Ascending aorta (tissue), 2 donors: ENCODE measurements at regions of chr5 and their contacts with region 1.

Region 1: DNA sequence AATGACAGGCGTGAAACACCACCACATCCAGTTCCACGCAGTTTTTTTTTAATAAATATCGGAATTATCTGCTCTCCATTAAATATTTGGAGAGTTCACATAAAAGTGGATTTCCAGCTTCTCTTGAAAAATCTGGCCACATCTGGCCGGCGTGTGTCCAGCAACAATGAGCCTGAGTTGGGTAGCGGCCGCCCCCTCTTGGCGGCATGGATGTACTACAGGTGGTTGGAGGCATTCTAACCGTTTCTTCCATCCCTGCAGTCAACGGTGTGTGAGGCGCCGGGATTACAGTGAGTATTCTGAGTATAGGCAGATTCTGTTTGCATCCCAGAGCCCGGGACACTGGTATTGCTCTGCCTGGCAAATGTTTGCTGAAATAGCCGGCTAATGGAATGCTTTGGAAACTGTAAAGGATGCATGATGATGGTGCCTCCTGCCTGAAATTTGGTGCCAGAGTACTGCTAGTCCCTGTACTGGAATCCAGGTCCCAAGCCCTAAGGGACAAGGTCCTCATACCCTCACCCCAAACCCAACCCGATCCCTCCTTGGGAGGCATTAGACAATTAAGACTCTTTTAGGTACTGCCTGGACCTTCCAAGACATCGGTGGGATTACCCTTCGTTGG is 13.6 kb upstream of the GM2A start:
- DNase-seq: peak in 1 of 2 donors; percentile 90
- H3K4me3 ChIP-seq: peak overlapping the region; percentile 37 to 45
- H3K27ac ChIP-seq: peak overlapping the region; percentile 48 to 53
- H3K4me1 ChIP-seq: peaks cover 0 to 4% of the 10 kb centered on the region in 2 donors
- H3K27me3 ChIP-seq: no peaks in the 10 kb centered on the region
- CTCF ChIP-seq: peak; percentile 72 to 92 (median 74)

Region 2: GRCh38 chr5:151051066-151051930 is 188.1 kb before region 1 on chr5:
- intact Hi-C with region 1: loop called (anchors 10 kb)
- DNase-seq: peak in 1 of 2 donors; percentile 91
- H3K4me3 ChIP-seq: no peak overlapping the region
- H3K27ac ChIP-seq: no peak overlapping the region
- H3K4me1 ChIP-seq: peaks cover 0 to 6% of the 10 kb centered on the region in 2 donors
- H3K27me3 ChIP-seq: no peaks in the 10 kb centered on the region
- CTCF ChIP-seq: peak; percentile 80 to 87 (median 86)

Region 3: DNA sequence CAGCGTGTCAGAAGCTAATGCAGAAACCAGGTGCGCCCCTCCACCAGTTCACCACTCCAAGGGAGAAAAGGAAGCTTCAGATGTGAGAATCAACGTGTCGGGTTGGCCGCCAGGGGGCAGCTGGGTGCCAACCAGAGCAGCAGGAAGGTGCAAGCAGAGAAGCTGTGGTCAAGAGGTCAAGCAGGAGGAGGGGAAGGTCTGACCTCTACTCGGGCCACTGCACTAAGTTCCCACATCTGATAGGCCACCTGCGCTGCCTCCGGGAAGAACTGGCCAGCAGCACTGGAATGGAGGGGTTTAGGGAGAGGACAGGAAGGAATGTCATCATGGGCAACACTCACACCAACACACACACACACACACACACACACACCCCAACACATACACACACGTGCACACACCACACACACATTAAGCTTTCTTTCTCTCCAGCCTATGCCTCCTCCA is 113.1 kb before region 1 on chr5:
- intact Hi-C with region 1: loop called (anchors 1 kb)
- DNase-seq: peak in 1 of 2 donors; percentile 82
- H3K4me3 ChIP-seq: no peak overlapping the region
- H3K27ac ChIP-seq: no peak overlapping the region
- H3K4me1 ChIP-seq: peaks cover 0 to 11% of the 10 kb centered on the region in 2 donors
- H3K27me3 ChIP-seq: no peaks in the 10 kb centered on the region
- CTCF ChIP-seq: peak; percentile 69 to 78 (median 78)

Region 4: DNA sequence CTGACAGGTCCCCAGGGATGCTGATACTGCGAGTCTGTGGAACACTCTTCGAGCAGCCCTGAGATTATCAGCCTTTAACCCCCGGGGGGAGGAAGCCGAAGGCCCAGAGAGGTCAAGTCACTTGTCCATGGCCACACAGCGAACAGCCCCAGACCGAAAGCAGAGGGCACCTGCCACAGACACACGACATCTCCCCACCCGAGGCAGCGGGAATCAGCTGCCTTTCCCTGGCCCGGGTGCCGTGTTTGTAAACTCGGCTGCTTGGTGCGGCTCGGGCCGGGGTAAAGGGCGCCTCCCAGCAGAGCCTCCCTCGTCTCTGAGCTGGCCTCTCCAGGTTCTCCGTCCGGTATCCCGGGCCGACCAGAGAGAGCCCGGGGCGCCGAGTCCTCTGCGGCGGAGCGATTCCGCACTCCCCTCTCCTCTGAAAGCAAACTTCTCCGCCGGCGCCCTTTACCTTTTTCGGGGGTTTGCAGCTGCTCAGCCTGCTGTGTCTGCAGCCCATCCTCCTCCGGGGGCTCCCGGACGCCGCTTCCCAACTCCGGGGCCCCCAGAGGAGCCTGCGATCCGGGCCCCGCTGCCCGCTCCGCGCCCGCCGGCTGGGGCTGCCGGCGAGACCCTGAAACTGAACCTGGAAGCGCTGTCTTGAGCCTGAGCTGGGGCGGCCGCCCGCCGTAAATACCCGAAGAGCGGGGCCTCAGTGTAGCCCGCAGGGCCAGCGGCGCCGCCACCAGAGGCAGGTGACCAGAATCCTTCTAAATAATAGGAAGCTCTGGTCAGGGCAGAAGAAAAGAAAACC is 15.7 kb before region 1 on chr5 and contains the start of gene CCDC69:
- intact Hi-C with region 1: loop called (anchors 1 kb)
- DNase-seq: peak in 1 of 2 donors; percentile 88
- H3K4me3 ChIP-seq: peak within 1 kb of the TSS; percentile 71 to 73
- H3K27ac ChIP-seq: peak within 1 kb of the TSS; percentile 55 to 77
- H3K4me1 ChIP-seq: peaks cover 13 to 17% of the 10 kb centered on the region in 2 donors
- H3K27me3 ChIP-seq: no peaks in the 10 kb centered on the region
- CTCF ChIP-seq: peak in 1 of 3 experiments; percentile 33
- total RNA-seq, gene CCDC69: 101 TPM